ENCODE measurements at regions of chr12 and their contacts with region 1.

Region 1: DNA sequence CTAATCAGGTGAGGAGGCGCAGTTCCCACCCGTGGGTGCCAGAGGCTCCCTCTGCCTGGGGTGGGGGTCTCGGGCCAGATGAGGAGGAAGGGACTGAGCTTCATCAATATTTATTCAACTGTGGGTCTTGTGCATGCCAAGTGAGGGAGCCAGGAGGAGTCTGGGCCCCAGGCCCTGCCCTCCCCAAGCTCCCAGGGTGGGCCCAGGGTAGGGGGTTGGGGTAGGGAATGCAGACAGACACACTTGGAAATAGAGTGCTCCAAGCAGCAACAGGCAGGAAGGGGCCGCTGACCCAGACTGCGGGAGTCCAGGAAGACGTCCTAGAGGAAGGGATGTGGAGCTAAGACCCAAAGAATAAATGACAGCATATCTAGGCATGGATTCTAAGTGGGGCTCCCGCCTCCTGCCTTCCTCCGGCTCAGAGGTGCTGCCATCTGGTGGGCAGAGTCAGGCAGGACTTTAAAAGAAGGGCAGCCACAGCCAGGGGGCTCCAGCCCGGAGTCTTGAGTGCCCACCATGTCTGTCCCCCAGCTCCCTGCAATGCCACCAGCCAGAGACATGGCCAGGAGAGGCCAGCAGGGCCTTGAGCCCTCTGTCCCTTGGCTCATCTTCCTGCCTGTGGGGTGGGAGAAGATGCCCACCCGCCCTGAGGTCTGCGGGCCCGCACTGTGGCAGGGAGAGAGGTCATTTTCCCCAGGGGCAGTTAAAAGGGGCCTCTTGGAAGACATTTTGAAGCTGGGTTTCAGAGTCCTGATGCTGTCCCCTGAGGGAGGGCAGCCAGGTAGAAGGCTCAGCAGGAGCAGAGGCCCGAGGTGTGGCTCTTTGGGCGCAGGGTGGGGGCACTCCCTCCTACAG is 70.1 kb downstream of the PHETA1 start:
- DNase-seq: peak; percentile 44
- ATAC-seq: peak; percentile 59 to 69

Region 2: GRCh38 chr12:110896559-110896958 is 402.2 kb before region 1 on chr12:
- intact Hi-C with region 1: loop called (anchors 2 to 10 kb)
- DNase-seq: no peak
- ATAC-seq: no peak

Region 3: DNA sequence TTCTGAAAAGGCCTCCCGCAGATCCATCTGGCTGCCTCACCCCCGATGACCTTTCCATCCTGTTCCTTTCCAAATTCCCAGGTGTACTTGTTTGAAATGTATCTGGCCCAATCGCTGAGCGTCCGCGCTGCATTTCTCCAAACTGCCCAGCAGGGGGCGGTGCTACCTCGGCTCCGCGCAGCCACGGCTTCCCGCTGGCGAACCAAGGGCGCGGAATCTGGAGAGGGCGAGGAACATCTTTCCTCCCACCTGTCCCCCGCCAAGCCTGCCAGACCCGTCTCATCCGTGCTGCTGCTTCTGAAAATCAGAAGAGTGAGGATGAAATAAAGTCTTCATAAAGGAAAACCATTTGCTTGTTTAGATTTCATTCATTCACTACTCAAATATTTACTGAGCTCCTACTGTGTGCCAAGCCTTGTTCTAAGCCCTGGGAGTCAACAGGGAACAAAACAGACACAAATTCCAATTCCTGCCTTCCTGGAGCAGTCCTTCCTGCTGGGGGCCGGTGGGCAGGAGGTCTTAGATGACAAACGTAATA is 361.6 kb before region 1 on chr12:
- intact Hi-C with region 1: loop called (anchors 2 to 10 kb)
- DNase-seq: peak; percentile 40
- ATAC-seq: peak; percentile 59 to 63

Region 4: GRCh38 chr12:111024205-111024801 is 274.5 kb before region 1 on chr12:
- intact Hi-C with region 1: loop called (anchors 2 to 10 kb)
- DNase-seq: peak; percentile 37
- ATAC-seq: peak; percentile 53 to 69

Region 5: GRCh38 chr12:111248236-111249017 is 50.4 kb before region 1 on chr12:
- intact Hi-C with region 1: no loop called
- DNase-seq: no peak
- ATAC-seq: no peak